ENCODE measurements at regions of chr13 and their contacts with region 1.

Region 1: DNA sequence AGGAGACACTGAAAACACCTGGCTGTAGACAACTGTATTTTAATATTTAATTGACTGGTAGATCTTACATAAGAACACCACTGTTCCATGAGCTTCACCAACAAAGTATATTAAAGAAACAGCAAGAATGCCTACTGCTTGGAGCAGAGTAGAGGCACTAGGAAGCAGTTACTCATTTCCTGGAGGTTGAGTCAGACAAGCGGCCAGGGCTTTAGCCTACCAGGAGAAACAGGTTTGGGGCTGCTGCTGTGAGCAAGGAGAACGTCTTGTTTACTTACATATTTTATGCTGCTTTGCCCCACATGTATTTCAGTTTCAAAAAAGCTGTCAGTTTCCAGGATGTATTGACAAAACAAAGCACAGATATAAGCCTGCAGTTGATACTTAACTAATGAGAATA is 33.4 kb downstream of the ALG5 start:
- DNase-seq: no peak
- ATAC-seq: no peak
- H3K4me3 ChIP-seq: no peak overlapping the region
- H3K27ac ChIP-seq: no peak overlapping the region
- H3K4me1 ChIP-seq: no peaks in the 10 kb centered on the region
- H3K27me3 ChIP-seq: no peaks in the 10 kb centered on the region
- CTCF ChIP-seq: no peak

Region 2: GRCh38 chr13:37001915-37002250 is 36.1 kb after region 1 on chr13:
- intact Hi-C with region 1: no loop called
- DNase-seq: no peak
- ATAC-seq: no peak
- H3K4me3 ChIP-seq: peak overlapping the region; percentile 94
- H3K27ac ChIP-seq: no peak overlapping the region
- H3K4me1 ChIP-seq: peaks cover 19% of the 10 kb centered on the region
- H3K27me3 ChIP-seq: no peaks in the 10 kb centered on the region
- CTCF ChIP-seq: no peak

Region 3: GRCh38 chr13:37023871-37024270 is 58.1 kb after region 1 on chr13:
- intact Hi-C with region 1: loop called in 1 of 2 experiments (anchors 10 kb)
- DNase-seq: no peak
- ATAC-seq: no peak
- H3K4me3 ChIP-seq: no peak overlapping the region
- H3K27ac ChIP-seq: no peak overlapping the region
- H3K4me1 ChIP-seq: no peaks in the 10 kb centered on the region
- H3K27me3 ChIP-seq: no peaks in the 10 kb centered on the region
- CTCF ChIP-seq: no peak

Measured in psoas muscle (tissue), 8 donors.